Activated B cell treated with CpG ODN at 0.5 μM for 24 hours (primary cell): ENCODE measurements at regions of chr2 and their contacts with region 1.

Region 1: GRCh38 chr2:144510294-144510991 is 9.5 kb downstream of the ZEB2 start:
- DNase-seq: no peak
- ATAC-seq: peak; percentile 67
- H3K4me3 Mint-ChIP-seq: peak overlapping the region; percentile 77
- H3K27ac Mint-ChIP-seq: peak overlapping the region; percentile 88
- H3K4me1 Mint-ChIP-seq: peaks cover 100% of the 10 kb centered on the region
- H3K27me3 Mint-ChIP-seq: no peaks in the 10 kb centered on the region
- CTCF ChIP-seq: no peak

Region 2: GRCh38 chr2:143960177-143960576 is 550.3 kb before region 1 on chr2:
- CTCF ChIA-PET with region 1: no interaction called
- POLR2A ChIA-PET with region 1: no interaction called
- intact Hi-C with region 1: no loop called
- DNase-seq: no peak
- ATAC-seq: no peak
- H3K4me3 Mint-ChIP-seq: no peak overlapping the region
- H3K27ac Mint-ChIP-seq: no peak overlapping the region
- H3K4me1 Mint-ChIP-seq: no peaks in the 10 kb centered on the region
- H3K27me3 Mint-ChIP-seq: no peaks in the 10 kb centered on the region
- CTCF ChIP-seq: no peak

Region 3: DNA sequence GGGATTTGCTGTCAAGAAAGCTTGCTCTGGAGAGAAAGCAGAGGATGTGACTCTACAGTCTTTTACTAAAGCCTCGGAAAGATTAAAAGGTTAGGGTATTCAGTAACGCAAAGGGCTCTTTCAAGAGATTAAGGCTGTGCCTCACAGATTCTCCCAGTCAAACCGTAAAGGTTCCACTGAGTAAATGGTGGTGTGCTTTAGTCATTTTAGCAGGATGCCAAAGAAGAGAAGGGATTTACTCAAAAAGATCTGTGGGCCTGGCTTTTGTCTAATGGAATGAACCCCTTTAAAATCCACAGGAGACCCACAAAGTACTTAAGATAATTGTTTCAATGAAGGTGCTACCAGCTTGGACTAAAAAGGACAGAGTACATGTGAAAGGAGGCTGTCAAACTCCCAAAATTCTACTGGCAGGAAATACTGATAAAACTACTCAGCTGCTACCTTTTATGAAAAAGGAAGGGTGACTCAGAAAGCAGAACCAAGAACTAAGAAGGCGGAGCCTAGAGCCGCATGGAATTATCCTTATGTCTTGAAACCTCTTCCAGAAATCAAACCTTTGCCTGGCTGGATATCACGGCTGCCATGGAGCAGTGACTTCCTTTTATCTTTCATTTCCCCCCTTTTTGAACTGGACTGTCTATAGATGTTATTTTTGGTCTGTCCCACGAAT is 679.7 kb after region 1 on chr2:
- CTCF ChIA-PET with region 1: no interaction called
- POLR2A ChIA-PET with region 1: no interaction called
- intact Hi-C with region 1: no loop called
- DNase-seq: no peak
- ATAC-seq: no peak
- H3K4me3 Mint-ChIP-seq: no peak overlapping the region
- H3K27ac Mint-ChIP-seq: no peak overlapping the region
- H3K4me1 Mint-ChIP-seq: peaks cover 24% of the 10 kb centered on the region
- H3K27me3 Mint-ChIP-seq: no peaks in the 10 kb centered on the region
- CTCF ChIP-seq: no peak

Region 4: DNA sequence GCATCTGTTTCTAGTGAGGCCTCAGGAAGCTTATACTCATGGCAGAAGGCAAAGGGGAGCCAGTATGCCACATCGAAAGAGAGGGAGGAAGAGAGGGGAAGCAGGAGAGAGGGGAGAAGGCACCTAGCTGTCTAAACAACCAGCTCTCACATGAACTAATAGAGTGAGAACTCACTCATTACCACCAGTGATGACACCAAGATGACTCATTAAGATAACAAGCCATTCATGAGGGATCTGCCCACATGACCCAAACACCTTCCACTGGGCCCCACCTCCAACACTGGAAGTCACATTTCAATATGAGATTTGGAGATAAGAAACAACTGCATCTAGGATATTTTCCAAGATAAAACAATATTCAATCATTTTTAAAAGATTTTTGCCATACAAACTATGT is 763.4 kb after region 1 on chr2:
- CTCF ChIA-PET with region 1: no interaction called
- POLR2A ChIA-PET with region 1: no interaction called
- intact Hi-C with region 1: no loop called
- DNase-seq: no peak
- ATAC-seq: no peak
- H3K4me3 Mint-ChIP-seq: no peak overlapping the region
- H3K27ac Mint-ChIP-seq: no peak overlapping the region
- H3K4me1 Mint-ChIP-seq: no peaks in the 10 kb centered on the region
- H3K27me3 Mint-ChIP-seq: no peaks in the 10 kb centered on the region
- CTCF ChIP-seq: no peak

Region 5: GRCh38 chr2:145644820-145645302 is 1134.4 kb after region 1 on chr2:
- CTCF ChIA-PET with region 1: no interaction called
- POLR2A ChIA-PET with region 1: no interaction called
- intact Hi-C with region 1: loop called (anchors 5 kb)
- DNase-seq: no peak
- ATAC-seq: peak; percentile 86
- H3K4me3 Mint-ChIP-seq: peak overlapping the region; percentile 70
- H3K27ac Mint-ChIP-seq: peak overlapping the region; percentile 92
- H3K4me1 Mint-ChIP-seq: peaks cover 47% of the 10 kb centered on the region
- H3K27me3 Mint-ChIP-seq: no peaks in the 10 kb centered on the region
- CTCF ChIP-seq: no peak

Region 6: GRCh38 chr2:146031158-146031557 is 1520.7 kb after region 1 on chr2:
- CTCF ChIA-PET with region 1: no interaction called
- POLR2A ChIA-PET with region 1: no interaction called
- intact Hi-C with region 1: no loop called
- DNase-seq: no peak
- ATAC-seq: no peak
- H3K4me3 Mint-ChIP-seq: no peak overlapping the region
- H3K27ac Mint-ChIP-seq: no peak overlapping the region
- H3K4me1 Mint-ChIP-seq: no peaks in the 10 kb centered on the region
- H3K27me3 Mint-ChIP-seq: no peaks in the 10 kb centered on the region
- CTCF ChIP-seq: no peak